Esophagus muscularis mucosa (tissue), 4 donors: ENCODE measurements at regions of chr12 and their contacts with region 1.

Region 1: GRCh38 chr12:80954857-80955520 is 17.3 kb upstream of the LIN7A start:
- DNase-seq: no peak
- H3K4me3 ChIP-seq: no peak overlapping the region
- H3K27ac ChIP-seq: no peak overlapping the region
- H3K4me1 ChIP-seq: no peaks in the 10 kb centered on the region
- H3K27me3 ChIP-seq: no peaks in the 10 kb centered on the region
- CTCF ChIP-seq: no peak
- EP300 ChIP-seq: no peak
- POLR2A ChIP-seq: no peak

Region 2: GRCh38 chr12:80353257-80353656 is 601.7 kb before region 1 on chr12:
- intact Hi-C with region 1: no loop called
- DNase-seq: no peak
- H3K4me3 ChIP-seq: no peak overlapping the region
- H3K27ac ChIP-seq: no peak overlapping the region
- H3K4me1 ChIP-seq: no peaks in the 10 kb centered on the region
- H3K27me3 ChIP-seq: no peaks in the 10 kb centered on the region
- CTCF ChIP-seq: no peak
- EP300 ChIP-seq: no peak
- POLR2A ChIP-seq: no peak

Region 3: GRCh38 chr12:80846952-80847351 is 108.0 kb before region 1 on chr12:
- intact Hi-C with region 1: loop called (anchors 10 kb)
- DNase-seq: no peak
- H3K4me3 ChIP-seq: no peak overlapping the region
- H3K27ac ChIP-seq: no peak overlapping the region
- H3K4me1 ChIP-seq: no peaks in the 10 kb centered on the region
- H3K27me3 ChIP-seq: no peaks in the 10 kb centered on the region
- CTCF ChIP-seq: no peak
- EP300 ChIP-seq: no peak
- POLR2A ChIP-seq: no peak

Region 4: GRCh38 chr12:81086342-81086741 is 131.4 kb after region 1 on chr12:
- intact Hi-C with region 1: no loop called
- DNase-seq: no peak
- H3K4me3 ChIP-seq: no peak overlapping the region
- H3K27ac ChIP-seq: no peak overlapping the region
- H3K4me1 ChIP-seq: peaks cover 0 to 15% (median 0%) of the 10 kb centered on the region in 4 donors
- H3K27me3 ChIP-seq: no peaks in the 10 kb centered on the region
- CTCF ChIP-seq: no peak
- EP300 ChIP-seq: no peak
- POLR2A ChIP-seq: no peak